ENCODE measurements at regions of chr1 and their contacts with region 1.

Region 1: GRCh38 chr1:44775078-44775929 is at the start of gene RPS8:
- DNase-seq: peak; percentile 86
- ATAC-seq: peak; percentile 80
- H3K4me3 Mint-ChIP-seq: peak within 1 kb of the TSS; percentile 91
- H3K27ac Mint-ChIP-seq: peak within 1 kb of the TSS; percentile 96
- H3K4me1 Mint-ChIP-seq: peaks cover 24% of the 10 kb centered on the region
- H3K27me3 Mint-ChIP-seq: no peaks in the 10 kb centered on the region
- total RNA-seq, gene RPS8: 1,522 to 1,548 TPM

Region 2: DNA sequence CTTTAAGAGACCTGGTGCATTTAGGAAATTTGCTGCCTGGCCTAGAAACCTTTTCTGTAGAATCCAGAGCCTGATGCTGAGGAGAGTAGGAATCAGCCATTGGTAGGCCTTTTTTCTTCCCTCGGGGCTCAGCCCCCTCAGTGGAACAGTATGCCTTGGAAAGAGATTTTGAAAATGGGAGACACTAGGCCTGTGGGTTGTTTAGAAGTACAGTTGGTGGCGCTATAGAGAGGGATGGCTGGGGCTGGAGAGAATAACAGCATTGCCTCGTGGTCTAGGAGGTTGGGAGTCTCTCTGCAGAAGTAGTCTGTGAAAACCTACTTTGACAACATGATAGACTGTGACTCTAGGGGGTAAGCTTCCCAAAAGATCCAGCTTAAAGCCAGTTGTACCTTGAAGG is 27.4 kb before region 1 on chr1:
- POLR2A ChIA-PET with region 1: interaction called, 43 read pairs
- DNase-seq: no peak
- ATAC-seq: peak; percentile 26
- H3K4me3 Mint-ChIP-seq: no peak overlapping the region
- H3K27ac Mint-ChIP-seq: peak overlapping the region; percentile 38
- H3K4me1 Mint-ChIP-seq: peaks cover 26% of the 10 kb centered on the region
- H3K27me3 Mint-ChIP-seq: no peaks in the 10 kb centered on the region

Region 3: DNA sequence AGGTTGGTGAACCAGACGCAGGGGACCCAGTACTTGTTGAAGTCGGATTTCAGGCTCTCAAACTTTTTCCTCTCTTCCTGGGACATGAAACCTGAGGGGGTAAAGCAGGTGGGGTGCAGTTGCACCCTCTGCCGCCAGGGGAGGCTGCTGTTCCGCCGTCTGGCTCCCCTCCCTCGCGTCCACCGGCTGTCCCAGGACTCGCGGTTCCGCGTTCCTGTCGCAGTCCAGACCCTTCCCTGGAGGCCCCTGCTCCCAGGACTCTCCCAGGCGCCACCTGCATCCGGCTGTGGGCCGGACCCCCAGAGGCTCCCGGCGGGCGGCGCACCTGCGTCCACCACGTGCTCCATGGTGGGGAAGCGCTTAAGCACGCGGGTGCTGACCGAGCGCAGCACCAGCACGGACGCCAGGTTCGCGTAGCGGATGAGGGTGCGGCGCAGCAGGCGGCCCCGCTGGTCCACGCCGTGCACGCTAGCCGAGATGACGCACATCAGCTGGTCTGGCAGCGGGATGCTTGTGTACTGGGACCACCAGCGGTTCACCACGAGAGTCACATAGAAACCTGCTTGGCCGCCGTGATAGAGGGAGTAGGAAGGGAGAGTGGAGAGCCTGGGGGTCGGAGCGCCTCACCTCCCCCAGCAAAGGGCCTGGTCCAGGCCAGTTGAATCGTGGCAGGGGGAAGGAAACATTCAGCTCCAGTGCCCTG is 11.0 kb after region 1 on chr1:
- POLR2A ChIA-PET with region 1: interaction called, 64 read pairs
- DNase-seq: peak; percentile 87
- ATAC-seq: peak; percentile 69
- H3K4me3 Mint-ChIP-seq: peak overlapping the region; percentile 66
- H3K27ac Mint-ChIP-seq: peak overlapping the region; percentile 71
- H3K4me1 Mint-ChIP-seq: peaks cover 26% of the 10 kb centered on the region
- H3K27me3 Mint-ChIP-seq: no peaks in the 10 kb centered on the region

Region 4: GRCh38 chr1:44799770-44800584 is 24.7 kb after region 1 on chr1 and contains the start of gene PLK3:
- POLR2A ChIA-PET with region 1: interaction called, 35 read pairs
- DNase-seq: peak; percentile 96
- ATAC-seq: peak; percentile 77
- H3K4me3 Mint-ChIP-seq: peak within 1 kb of the TSS; percentile 92
- H3K27ac Mint-ChIP-seq: peak within 1 kb of the TSS; percentile 97
- H3K4me1 Mint-ChIP-seq: peaks cover 24% of the 10 kb centered on the region
- H3K27me3 Mint-ChIP-seq: no peaks in the 10 kb centered on the region
- total RNA-seq, gene PLK3: 68.8 to 70.7 TPM

Region 5: GRCh38 chr1:44812822-44813543 is 37.7 kb after region 1 on chr1:
- POLR2A ChIA-PET with region 1: interaction called, 35 read pairs
- DNase-seq: peak; percentile 36
- ATAC-seq: no peak
- H3K4me3 Mint-ChIP-seq: peak overlapping the region; percentile 35
- H3K27ac Mint-ChIP-seq: peak overlapping the region; percentile 38
- H3K4me1 Mint-ChIP-seq: peaks cover 47% of the 10 kb centered on the region
- H3K27me3 Mint-ChIP-seq: no peaks in the 10 kb centered on the region

Region 6: DNA sequence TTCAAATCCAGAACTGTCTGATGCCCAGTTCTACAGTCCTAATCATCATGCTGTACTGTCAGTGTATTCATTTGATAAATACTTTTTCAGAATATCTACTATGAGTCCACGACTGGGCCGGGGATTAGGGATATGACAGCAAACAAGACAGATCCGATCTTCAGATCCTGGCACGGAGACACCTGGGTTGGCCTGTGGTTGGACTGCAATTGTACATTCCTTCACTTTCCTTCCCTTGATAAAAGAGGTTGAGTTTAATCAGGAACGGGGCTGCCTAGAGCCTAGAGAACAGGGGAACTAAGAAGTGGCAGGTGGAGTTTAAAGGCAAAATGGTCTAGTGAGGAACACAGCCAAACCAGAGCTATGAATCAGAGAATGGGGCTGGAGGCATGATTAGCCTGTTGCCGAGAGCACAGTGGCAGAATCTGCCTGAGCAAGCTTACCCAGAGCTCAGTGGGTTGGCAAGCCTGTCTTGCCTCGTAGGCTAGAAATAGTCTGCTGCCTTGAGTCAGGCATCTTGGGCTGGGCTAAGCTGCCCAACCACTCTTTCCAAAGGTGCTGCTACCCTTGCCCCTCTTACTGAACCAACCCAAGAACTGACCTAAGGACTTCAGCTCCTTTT is 105.8 kb after region 1 on chr1:
- POLR2A ChIA-PET with region 1: no interaction called
- DNase-seq: no peak
- ATAC-seq: no peak
- H3K4me3 Mint-ChIP-seq: no peak overlapping the region
- H3K27ac Mint-ChIP-seq: no peak overlapping the region
- H3K4me1 Mint-ChIP-seq: no peaks in the 10 kb centered on the region
- H3K27me3 Mint-ChIP-seq: no peaks in the 10 kb centered on the region

Region 7: DNA sequence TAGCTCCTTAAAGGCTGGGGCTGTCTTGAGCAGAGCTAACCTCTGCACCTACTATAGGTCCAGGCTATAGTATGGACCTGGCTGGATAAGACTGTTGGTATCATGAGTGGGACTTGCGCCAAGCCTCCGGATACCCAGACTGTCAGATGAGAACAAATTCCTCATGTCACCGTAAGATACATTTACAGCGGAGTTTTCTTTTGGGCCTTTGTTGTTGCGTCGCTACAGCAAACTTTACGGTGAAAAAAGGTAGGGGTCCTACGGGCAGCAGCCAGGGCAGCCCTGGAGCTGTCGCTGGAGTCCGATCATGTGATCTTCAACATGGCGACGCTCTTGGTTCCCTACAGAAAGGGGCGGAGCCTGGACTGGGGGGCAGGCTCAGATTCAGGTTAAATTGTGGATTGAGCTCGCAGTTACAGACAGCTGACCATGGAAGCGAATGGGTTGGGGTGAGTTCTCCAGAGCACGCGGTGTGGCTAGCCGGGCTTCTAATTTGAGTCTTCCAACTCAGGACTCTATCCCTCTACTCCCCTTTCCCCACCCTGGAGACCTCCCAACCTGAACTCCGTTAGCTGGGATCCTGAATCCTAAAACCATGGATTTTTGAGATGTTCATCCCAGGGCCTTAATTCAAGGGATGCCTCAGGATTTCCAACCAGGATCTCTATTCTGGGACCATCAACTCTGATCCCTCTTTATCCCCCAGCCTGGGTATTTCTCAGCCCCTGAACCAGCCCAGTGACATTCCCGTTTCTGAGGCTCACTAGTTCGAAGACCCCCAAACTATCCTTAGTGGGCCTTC is 236.7 kb after region 1 on chr1 and contains the start of gene UROD:
- POLR2A ChIA-PET with region 1: interaction called, 27 read pairs
- DNase-seq: peak; percentile 86
- ATAC-seq: peak; percentile 71
- H3K4me3 Mint-ChIP-seq: peak within 1 kb of the TSS; percentile 89
- H3K27ac Mint-ChIP-seq: peak within 1 kb of the TSS; percentile 97
- H3K4me1 Mint-ChIP-seq: peaks cover 29% of the 10 kb centered on the region
- H3K27me3 Mint-ChIP-seq: no peaks in the 10 kb centered on the region
- total RNA-seq, gene UROD: 71.7 to 79.2 TPM

Measured in activated naive CD8-positive, alpha-beta T cell treated with anti-CD3 and anti-CD28 coated beads, Interleukin-2, amount 10 ng/mL, durations not matched to agents 7 days and 5 days (primary cell).